H1 (cell line): ENCODE measurements at regions of chr9 and their contacts with region 1.

Region 1: DNA sequence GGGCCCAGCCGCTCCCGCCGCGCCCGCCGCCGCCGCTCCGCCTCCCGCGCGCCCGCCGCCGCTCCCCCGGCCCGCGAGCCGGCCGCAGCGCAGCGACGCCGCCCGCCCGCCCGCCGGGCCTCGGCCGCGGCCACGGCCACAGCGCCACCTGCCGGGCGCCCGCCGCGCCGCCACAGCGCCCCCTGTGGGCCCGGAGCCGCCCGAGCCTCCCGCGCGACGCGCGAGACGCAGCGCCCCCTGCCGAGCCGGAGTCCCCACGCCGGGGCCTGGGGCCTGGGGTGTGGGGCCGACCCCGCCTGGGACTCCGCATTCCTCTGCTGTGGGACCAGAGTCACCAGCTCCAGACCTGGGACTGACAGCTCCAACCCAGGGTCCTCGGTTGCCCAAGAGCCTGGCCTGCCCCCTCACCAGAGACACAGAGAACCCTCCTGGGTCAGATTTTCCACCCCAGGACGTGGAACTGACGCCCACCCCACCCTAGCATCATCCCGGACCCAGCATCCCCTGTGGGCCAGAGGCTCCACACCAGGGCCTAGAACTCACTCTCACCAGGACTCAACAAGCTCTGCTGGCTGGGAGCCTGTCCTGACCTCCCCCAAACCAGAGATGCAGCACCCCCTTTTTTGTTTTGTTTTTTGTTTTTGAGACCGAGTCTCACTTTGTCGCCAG is at the start of gene RAPGEF1:
- DNase-seq: peak in 1 of 2 experiments; percentile 95
- H3K4me3 ChIP-seq: peak within 1 kb of the TSS; percentile 66 to 77 (median 71)
- H3K27ac ChIP-seq: no peak within 1 kb of the TSS; the same call in 1 of the 2 replicates
- H3K4me1 ChIP-seq: peaks cover 2 to 8% (median 4%) of the 10 kb centered on the region in 4 experiments; a peak in 5 of 7 replicates
- H3K27me3 ChIP-seq: no peaks in the 10 kb centered on the region; a peak in 1 of 7 replicates
- CTCF ChIP-seq: peak; percentile 76 to 99 (median 99)
- EP300 ChIP-seq: no peak
- POLR2A ChIP-seq: no peak
- RAD21 ChIP-seq: peak; percentile 61 to 81
- total RNA-seq, gene RAPGEF1: 73.8 and 78.9 TPM in 2 replicates

Region 2: GRCh38 chr9:131590908-131591844 is 148.9 kb before region 1 on chr9:
- CTCF ChIA-PET with region 1: interaction called, 82 read pairs
- POLR2A ChIA-PET with region 1: no interaction called
- DNase-seq: peak; percentile 49 to 77
- H3K4me3 ChIP-seq: no peak overlapping the region
- H3K27ac ChIP-seq: no peak overlapping the region
- H3K4me1 ChIP-seq: no peaks in the 10 kb centered on the region
- H3K27me3 ChIP-seq: no peaks in the 10 kb centered on the region
- CTCF ChIP-seq: peak in 2 of 3 experiments; percentile 92 to 98; a peak in 3 of 4 replicates
- EP300 ChIP-seq: no peak
- POLR2A ChIP-seq: no peak
- RAD21 ChIP-seq: peak; percentile 93 to 95

Region 3: DNA sequence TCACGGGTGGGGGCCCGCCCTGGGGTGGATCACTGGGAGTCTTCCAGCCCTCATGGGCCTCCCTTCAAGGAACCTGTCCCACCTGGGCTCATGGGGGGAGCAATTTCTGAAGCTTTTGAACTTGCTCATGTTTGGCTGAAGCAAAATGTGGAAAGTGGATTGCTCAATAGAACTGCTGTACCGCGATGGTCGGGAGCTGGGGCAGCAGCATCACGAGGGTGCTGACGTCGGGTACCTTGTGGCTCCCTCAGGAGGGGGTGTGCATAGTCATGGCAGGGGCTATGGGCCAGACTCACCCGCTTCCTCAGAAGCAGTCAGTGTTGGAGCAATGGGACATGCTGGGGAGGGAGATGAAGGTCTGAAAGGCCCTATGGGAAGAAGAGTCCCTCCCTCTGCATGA is 136.9 kb before region 1 on chr9:
- CTCF ChIA-PET with region 1: interaction called, 13 read pairs
- POLR2A ChIA-PET with region 1: interaction called, 4 read pairs
- DNase-seq: no peak
- H3K4me3 ChIP-seq: no peak overlapping the region
- H3K27ac ChIP-seq: no peak overlapping the region
- H3K4me1 ChIP-seq: peaks cover 0 to 11% (median 7%) of the 10 kb centered on the region in 4 experiments; a peak in 6 of 7 replicates
- H3K27me3 ChIP-seq: no peaks in the 10 kb centered on the region
- CTCF ChIP-seq: no peak
- EP300 ChIP-seq: no peak
- POLR2A ChIP-seq: no peak
- RAD21 ChIP-seq: no peak

Region 4: DNA sequence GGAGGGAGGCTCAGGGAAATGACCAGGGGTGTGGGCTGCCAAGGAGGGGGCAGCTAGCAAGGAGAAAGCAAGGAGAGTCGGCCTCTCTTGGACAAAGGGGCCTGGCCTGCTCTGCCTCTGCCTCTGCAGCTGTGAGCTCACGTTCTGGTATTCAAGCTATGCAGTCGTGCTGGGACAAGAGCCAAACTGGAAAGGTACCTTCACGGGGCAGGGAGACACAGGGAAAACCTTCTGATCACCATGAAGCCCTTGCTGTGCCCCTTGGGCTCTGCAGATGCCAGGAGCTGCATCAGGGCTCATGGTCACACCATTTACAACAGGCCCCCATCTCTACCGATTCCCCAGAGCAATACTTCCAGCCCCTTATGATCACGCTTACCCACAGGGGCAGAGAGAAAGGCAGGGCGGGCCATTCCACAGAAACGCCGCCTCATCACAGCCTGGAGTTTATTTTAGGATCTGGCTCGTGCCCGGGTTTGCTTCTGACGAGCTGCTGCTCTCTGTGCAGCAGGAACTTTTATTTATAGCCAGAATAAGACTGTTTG is 131.5 kb before region 1 on chr9:
- CTCF ChIA-PET with region 1: interaction called, 13 read pairs
- POLR2A ChIA-PET with region 1: interaction called, 4 read pairs
- DNase-seq: peak; percentile 63 to 72
- H3K4me3 ChIP-seq: no peak overlapping the region
- H3K27ac ChIP-seq: peak overlapping the region; percentile 74
- H3K4me1 ChIP-seq: peaks cover 11 to 24% (median 20%) of the 10 kb centered on the region in 4 experiments
- H3K27me3 ChIP-seq: no peaks in the 10 kb centered on the region
- CTCF ChIP-seq: no peak
- EP300 ChIP-seq: peak in 1 of 2 experiments; percentile 67; a peak in 1 of 3 replicates
- POLR2A ChIP-seq: peak in 1 of 2 experiments; percentile 64; a peak in 2 of 3 replicates
- RAD21 ChIP-seq: no peak; a peak in 3 of 4 replicates

Region 5: GRCh38 chr9:131641618-131642495 is 98.3 kb before region 1 on chr9:
- CTCF ChIA-PET with region 1: interaction called, 31 read pairs
- POLR2A ChIA-PET with region 1: no interaction called
- DNase-seq: no peak
- H3K4me3 ChIP-seq: no peak overlapping the region
- H3K27ac ChIP-seq: no peak overlapping the region
- H3K4me1 ChIP-seq: peaks cover 0 to 7% (median 5%) of the 10 kb centered on the region in 4 experiments; a peak in 6 of 7 replicates
- H3K27me3 ChIP-seq: no peaks in the 10 kb centered on the region
- CTCF ChIP-seq: peak; percentile 22 to 41 (median 36)
- EP300 ChIP-seq: no peak
- POLR2A ChIP-seq: no peak
- RAD21 ChIP-seq: peak; percentile 45 to 60

Region 6: GRCh38 chr9:131755541-131756198 is 15.6 kb after region 1 on chr9:
- CTCF ChIA-PET with region 1: interaction called, 18 read pairs
- POLR2A ChIA-PET with region 1: interaction called, 5 read pairs
- DNase-seq: peak; percentile 74 to 93
- H3K4me3 ChIP-seq: no peak overlapping the region
- H3K27ac ChIP-seq: no peak overlapping the region
- H3K4me1 ChIP-seq: no peaks in the 10 kb centered on the region; a peak in 1 of 7 replicates
- H3K27me3 ChIP-seq: no peaks in the 10 kb centered on the region
- CTCF ChIP-seq: peak; percentile 90 to 95 (median 94)
- EP300 ChIP-seq: no peak
- POLR2A ChIP-seq: no peak
- RAD21 ChIP-seq: peak; percentile 77 to 78